ENCODE measurements at regions of chr17 and their contacts with region 1.

Region 1: DNA sequence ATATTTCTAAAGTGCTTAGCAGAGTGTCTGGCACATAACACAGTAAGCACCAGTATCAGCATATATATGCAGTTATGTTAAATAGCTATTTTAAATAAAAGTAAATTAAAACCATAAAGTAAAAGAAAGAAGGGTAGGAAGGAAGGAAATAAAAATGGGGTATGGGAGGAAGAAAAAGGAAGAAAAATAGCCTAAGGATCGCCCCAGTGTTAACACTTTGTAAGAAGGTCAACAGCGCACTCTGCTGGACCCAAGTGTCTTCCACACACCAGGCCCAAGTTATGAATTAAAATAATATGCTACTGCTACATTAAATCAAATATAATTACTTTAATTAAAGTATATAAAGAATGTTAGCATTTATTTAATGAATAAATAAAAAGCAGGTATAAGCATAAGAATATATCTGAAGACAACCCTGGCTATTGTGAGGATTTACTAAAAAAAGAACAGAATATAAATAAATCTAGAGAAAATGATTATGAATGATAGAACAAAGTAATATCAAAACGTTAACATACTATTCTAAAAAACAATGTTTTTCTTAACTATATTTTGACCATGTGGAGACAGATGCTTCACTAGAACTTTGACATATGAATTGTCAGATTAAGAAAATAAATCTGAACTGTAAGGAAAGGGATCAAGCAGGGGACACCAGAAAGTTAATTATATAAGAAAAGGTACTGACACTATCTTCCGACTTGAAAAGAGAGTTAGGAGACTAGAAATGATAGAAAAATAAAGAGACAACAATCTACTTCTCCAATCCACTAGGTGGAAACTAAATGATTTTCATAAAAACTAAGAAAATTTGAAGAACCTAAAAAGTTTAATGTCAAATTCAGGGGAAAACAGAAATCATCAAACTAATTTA is 25.9 kb downstream of the BRIP1 start:
- DNase-seq: peak; percentile 45
- H3K4me3 ChIP-seq: no peak overlapping the region
- H3K27ac ChIP-seq: no peak overlapping the region
- H3K4me1 ChIP-seq: no peaks in the 10 kb centered on the region
- H3K27me3 ChIP-seq: no peaks in the 10 kb centered on the region
- CTCF ChIP-seq: peak; percentile 61

Region 2: GRCh38 chr17:61635913-61636432 is 201.4 kb before region 1 on chr17:
- intact Hi-C with region 1: loop called (anchors 5 kb)
- DNase-seq: peak; percentile 51
- H3K4me3 ChIP-seq: no peak overlapping the region
- H3K27ac ChIP-seq: no peak overlapping the region
- H3K4me1 ChIP-seq: no peaks in the 10 kb centered on the region
- H3K27me3 ChIP-seq: no peaks in the 10 kb centered on the region
- CTCF ChIP-seq: peak; percentile 68

Region 3: GRCh38 chr17:61897303-61898200 is 60.1 kb after region 1 on chr17:
- intact Hi-C with region 1: no loop called
- DNase-seq: no peak
- H3K4me3 ChIP-seq: no peak overlapping the region
- H3K27ac ChIP-seq: no peak overlapping the region
- H3K4me1 ChIP-seq: no peaks in the 10 kb centered on the region
- H3K27me3 ChIP-seq: no peaks in the 10 kb centered on the region
- CTCF ChIP-seq: no peak

Measured in colonic mucosa (tissue), 4 donors.